Panc1 (cell line): ENCODE measurements at regions of chr9 and their contacts with region 1.

Region 1: DNA sequence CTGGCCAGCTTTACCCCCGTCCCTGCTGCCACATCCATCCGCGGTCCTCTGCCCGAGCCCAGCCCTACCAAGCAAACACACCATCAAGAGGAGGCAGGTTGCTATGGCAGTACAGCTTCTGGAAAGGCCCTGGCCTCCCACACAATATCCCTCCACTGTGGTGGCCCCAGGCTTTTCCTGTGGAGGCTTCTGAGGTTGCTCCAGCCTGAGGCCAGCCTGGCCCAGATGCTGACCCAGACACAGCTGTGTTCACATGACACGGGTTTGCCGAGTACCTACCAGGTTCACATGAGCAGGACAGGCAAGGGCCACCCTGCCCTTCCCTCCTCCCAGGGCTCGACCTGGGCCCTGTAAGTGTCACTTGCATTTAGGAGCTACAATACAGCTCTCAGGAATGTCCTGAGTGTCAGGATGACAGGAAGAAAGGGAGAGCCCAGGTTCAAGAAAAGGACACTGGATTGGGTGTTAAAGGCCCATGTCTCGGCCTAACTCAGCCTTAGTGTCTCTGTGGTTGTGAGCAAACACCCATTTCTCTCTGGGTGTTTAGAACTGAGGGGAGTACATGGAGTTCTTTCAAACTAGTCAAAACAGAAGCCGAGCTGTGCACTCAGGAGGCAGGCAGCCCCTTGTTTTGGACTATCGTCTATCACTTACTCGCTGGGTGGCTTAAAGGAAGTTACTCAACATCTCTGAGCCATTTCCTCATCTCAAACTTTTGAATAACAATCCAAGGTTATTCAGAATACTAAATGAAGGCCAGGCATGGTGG is 40.2 kb downstream of the NAIF1 start:
- DNase-seq: no peak
- ATAC-seq: peak; percentile 61
- H3K4me3 ChIP-seq: no peak overlapping the region
- H3K27ac ChIP-seq: peak overlapping the region; percentile 85
- H3K4me1 ChIP-seq: peaks cover 46% of the 10 kb centered on the region
- H3K27me3 ChIP-seq: no peaks in the 10 kb centered on the region
- CTCF ChIP-seq: no peak

Region 2: GRCh38 chr9:127970401-127971313 is 56.3 kb before region 1 on chr9:
- CTCF ChIA-PET with region 1: no interaction called
- POLR2A ChIA-PET with region 1: no interaction called
- in situ Hi-C with region 1: no loop called
- intact Hi-C with region 1: loop called (anchors 5 kb)
- DNase-seq: no peak
- ATAC-seq: no peak
- H3K4me3 ChIP-seq: peak overlapping the region; percentile 0 to 98
- H3K27ac ChIP-seq: peak overlapping the region; percentile 94
- H3K4me1 ChIP-seq: peaks cover 86% of the 10 kb centered on the region
- H3K27me3 ChIP-seq: no peaks in the 10 kb centered on the region
- CTCF ChIP-seq: no peak

Region 3: DNA sequence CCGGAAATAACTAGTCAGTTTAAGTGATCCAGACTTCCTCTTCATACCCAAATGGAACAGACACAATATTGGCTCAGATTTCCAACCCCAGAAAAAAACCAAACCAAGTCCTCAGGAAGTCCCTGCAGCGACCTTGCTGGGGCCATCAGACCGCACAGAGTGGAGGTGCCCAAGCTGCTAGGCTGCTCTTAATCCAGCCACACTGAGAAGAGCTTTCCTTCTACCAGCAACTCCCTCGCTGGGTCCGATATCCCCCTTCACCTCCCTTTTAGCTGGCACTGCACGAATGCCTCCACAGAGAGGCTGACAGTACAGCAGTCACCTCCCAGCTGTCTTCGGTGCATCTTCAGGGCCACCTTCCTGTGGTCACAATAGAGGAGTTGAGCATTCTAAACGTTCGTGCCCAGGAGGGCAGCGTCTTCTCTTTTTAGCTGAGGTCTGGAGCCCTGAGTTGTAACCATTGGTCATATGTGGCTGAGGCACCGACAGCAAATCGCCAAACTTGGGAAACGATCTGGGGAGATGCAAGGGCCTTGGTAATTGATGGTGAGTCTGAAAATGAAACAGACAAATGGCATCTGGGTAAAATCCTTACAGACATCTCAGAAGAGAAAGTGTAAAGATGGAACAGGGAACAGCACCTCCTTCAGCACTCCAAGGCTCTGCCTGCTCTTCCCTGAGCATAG is 34.5 kb after region 1 on chr9:
- CTCF ChIA-PET with region 1: no interaction called
- POLR2A ChIA-PET with region 1: no interaction called
- in situ Hi-C with region 1: no loop called
- intact Hi-C with region 1: no loop called
- DNase-seq: no peak
- ATAC-seq: no peak
- H3K4me3 ChIP-seq: no peak overlapping the region
- H3K27ac ChIP-seq: no peak overlapping the region
- H3K4me1 ChIP-seq: peaks cover 9% of the 10 kb centered on the region
- H3K27me3 ChIP-seq: no peaks in the 10 kb centered on the region
- CTCF ChIP-seq: no peak

Region 4: DNA sequence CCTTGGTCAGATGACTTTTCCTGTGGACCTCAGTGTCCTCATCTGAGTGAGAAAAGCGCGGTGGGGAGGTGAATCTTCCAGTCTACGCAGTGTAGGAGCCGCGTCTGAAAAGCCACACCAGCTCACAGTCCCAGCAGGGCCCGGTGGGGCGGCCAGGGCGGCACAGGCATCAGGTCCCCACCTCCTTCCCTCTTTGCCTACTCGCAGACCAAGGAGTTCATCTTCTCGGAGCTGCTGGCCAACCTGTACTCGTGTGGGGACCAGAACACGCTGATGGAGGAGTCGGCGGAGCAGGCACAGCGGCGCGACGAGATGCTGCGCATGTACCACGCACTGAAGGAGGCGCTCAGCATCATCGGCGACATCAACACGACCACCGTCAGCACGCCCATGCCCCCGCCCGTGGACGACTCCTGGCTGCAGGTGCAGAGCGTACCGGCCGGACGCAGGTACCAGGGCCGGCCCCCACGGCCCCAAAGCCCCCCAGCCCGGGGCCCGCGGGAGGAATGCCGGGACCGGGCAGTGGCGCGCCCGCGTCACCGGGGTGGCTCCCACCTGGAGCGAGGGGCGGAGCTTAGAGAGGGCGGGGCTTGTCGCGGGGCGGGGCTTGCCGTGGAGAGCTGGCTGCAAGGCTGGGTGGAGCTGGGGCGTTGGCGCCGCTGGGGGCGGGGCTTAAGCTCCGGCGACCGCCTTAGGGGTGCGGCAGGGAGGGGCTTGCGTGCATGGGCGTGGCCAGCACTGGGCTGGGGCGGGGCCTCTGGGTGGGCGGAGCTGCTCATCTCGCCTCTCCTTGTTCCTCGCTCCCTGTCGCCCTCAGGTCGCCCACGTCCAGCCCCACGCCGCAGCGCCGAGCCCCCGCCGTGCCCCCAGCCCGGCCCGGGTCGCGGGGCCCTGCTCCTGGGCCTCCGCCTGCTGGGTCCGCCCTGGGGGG is 223.2 kb after region 1 on chr9:
- CTCF ChIA-PET with region 1: no interaction called
- POLR2A ChIA-PET with region 1: no interaction called
- in situ Hi-C with region 1: no loop called
- intact Hi-C with region 1: no loop called
- DNase-seq: peak; percentile 18
- ATAC-seq: peak; percentile 90
- H3K4me3 ChIP-seq: peak overlapping the region; percentile 40 to 53
- H3K27ac ChIP-seq: no peak overlapping the region
- H3K4me1 ChIP-seq: no peaks in the 10 kb centered on the region
- H3K27me3 ChIP-seq: no peaks in the 10 kb centered on the region
- CTCF ChIP-seq: no peak